Posterior cingulate gyrus (tissue), 11 donors: ENCODE measurements at regions of chr17 and their contacts with region 1.

Region 1: GRCh38 chr17:4004517-4005295 is 40.5 kb upstream of the ATP2A3 start:
- DNase-seq: peak in 7 of 10 donors; percentile 36 to 92 (median 46)

Region 2: GRCh38 chr17:3865176-3865575 is 139.5 kb before region 1 on chr17:
- intact Hi-C with region 1: loop called (anchors 10 kb)
- DNase-seq: peak in 3 of 10 donors; percentile 37 to 90 (median 53)

Region 3: GRCh38 chr17:3915995-3916696 is 88.6 kb before region 1 on chr17 and contains the start of gene P2RX1:
- intact Hi-C with region 1: loop called (anchors 5 kb)
- DNase-seq: no peak